Mammary epithelial cell (primary cell): ENCODE measurements at regions of chr15 and their contacts with region 1.

Region 1: DNA sequence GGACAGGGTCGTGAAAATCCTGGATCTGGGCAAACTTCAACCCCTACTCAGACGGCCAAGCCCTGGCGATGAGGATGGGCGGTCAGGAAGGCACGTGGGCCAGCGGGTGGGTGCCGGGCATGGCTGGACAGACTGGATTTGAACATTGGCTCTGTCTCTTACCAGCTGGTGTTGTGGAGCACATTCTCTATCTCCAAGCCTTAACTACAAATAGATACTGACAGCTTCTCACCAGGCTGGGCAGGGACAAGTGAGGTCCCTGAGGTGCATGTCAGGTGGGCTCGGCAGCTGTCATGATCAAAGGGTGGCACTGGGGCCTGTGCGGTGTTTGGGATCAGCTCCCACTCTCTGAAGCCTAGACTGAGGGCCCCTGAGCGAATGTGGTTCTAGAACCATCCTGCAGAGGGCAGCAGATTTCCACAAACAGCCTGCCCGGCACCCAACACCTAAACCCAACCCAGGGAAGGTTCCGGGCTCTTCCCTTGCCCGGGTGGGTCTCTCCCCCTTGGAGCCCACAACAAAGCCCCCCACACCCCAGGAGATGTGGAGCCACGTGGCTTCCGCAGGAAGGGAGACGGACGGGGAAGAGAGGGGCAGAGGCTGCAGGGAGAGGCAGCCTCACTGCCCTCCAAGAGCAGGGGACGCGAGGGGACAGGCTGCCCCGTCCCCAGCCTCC is 58.4 kb downstream of the RGMA start:
- DNase-seq: peak; percentile 62
- H3K4me3 ChIP-seq: no peak overlapping the region
- H3K27ac ChIP-seq: no peak overlapping the region
- H3K4me1 ChIP-seq: peaks cover 33% of the 10 kb centered on the region
- H3K27me3 ChIP-seq: no peaks in the 10 kb centered on the region
- CTCF ChIP-seq: peak; percentile 87 to 88

Region 2: DNA sequence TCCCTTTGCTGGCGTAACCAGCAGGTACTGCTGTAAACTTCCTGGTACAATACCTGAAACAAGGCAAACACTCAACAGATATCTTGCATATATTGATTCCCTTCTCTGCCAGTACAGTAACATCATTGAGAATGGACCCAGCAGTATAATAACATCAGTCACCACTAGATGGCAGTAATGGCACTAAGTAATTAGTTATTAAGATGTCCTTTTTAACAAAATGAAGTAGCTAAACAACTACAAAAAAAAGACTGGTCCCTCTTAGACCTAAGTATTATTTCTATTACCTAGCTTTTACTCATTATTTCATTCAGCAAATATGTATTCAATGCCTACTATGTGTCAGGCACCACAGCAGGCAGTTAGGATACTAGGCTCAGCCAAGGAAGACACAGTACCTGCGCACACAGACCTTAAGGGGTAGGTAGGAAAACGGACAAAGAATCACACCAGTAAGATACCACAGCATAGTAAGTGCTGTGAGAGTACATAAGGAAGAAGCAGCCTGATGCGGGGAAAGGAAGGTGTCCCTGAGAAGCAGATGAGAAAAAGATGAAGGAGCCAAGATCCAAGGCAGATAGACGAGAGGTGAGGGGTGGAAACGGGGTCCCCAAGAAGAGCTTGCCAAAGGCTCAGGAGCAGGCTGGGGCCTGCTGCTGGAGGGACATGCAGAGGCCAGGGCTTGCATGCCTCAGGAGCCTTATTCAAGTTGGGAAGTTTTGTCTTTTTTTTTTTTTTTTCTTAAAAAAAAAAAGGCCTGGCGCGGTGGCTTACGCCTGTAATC is 233.2 kb before region 1 on chr15:
- CTCF ChIA-PET with region 1: no interaction called
- dilution Hi-C with region 1: no loop called
- in situ Hi-C with region 1: no loop called
- intact Hi-C with region 1: loop called (anchors 2 kb)
- DNase-seq: peak; percentile 66
- H3K4me3 ChIP-seq: no peak overlapping the region
- H3K27ac ChIP-seq: peak overlapping the region; percentile 35
- H3K4me1 ChIP-seq: peaks cover 17% of the 10 kb centered on the region
- H3K27me3 ChIP-seq: no peaks in the 10 kb centered on the region
- CTCF ChIP-seq: peak; percentile 58 to 65

Region 3: DNA sequence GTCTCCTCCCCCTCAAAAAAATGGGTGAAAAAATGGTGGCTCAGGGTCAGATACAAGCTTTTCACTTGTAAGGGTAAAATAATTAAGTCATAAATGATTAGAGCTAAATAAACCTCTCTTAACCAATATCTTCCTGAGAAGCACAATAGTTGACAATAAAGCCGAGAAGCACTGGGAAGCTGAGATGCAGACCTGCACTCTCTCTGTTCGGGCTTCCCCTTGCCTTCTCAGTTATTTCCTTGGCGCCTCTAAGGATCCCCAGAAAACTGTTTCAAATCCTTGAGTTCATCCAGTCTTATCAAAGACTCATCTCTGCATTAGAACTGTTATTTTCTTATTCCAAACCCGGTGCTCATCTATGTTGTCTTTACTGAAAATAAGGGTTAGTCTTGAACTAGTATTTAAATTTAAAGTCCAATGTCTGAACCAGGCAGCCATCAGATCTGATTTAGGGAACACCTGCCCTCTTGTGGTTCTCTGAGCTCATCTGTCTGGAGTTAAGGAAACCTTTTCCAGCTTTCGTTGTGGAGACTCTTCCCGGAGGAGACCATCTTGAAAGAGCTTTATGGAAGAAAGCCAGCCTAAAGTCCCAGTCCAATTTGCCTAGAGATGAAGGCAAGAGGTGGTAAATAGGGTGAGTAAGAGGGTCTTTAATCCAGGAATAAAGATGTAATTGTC is 944.4 kb after region 1 on chr15:
- CTCF ChIA-PET with region 1: no interaction called
- dilution Hi-C with region 1: no loop called
- in situ Hi-C with region 1: loop called in 1 of 2 experiments (anchors 25 kb)
- intact Hi-C with region 1: loop called (anchors 2 kb)
- DNase-seq: peak; percentile 33
- H3K4me3 ChIP-seq: no peak overlapping the region
- H3K27ac ChIP-seq: no peak overlapping the region
- H3K4me1 ChIP-seq: no peaks in the 10 kb centered on the region
- H3K27me3 ChIP-seq: no peaks in the 10 kb centered on the region
- CTCF ChIP-seq: peak; percentile 48 to 77

Region 4: GRCh38 chr15:93997084-93997918 is 966.7 kb after region 1 on chr15:
- CTCF ChIA-PET with region 1: no interaction called
- dilution Hi-C with region 1: no loop called
- in situ Hi-C with region 1: loop called in 1 of 2 experiments (anchors 25 kb)
- intact Hi-C with region 1: loop called (anchors 2 kb)
- DNase-seq: peak; percentile 11
- H3K4me3 ChIP-seq: no peak overlapping the region
- H3K27ac ChIP-seq: no peak overlapping the region
- H3K4me1 ChIP-seq: no peaks in the 10 kb centered on the region
- H3K27me3 ChIP-seq: peaks cover 2% of the 10 kb centered on the region
- CTCF ChIP-seq: peak; percentile 74 to 85

Region 5: DNA sequence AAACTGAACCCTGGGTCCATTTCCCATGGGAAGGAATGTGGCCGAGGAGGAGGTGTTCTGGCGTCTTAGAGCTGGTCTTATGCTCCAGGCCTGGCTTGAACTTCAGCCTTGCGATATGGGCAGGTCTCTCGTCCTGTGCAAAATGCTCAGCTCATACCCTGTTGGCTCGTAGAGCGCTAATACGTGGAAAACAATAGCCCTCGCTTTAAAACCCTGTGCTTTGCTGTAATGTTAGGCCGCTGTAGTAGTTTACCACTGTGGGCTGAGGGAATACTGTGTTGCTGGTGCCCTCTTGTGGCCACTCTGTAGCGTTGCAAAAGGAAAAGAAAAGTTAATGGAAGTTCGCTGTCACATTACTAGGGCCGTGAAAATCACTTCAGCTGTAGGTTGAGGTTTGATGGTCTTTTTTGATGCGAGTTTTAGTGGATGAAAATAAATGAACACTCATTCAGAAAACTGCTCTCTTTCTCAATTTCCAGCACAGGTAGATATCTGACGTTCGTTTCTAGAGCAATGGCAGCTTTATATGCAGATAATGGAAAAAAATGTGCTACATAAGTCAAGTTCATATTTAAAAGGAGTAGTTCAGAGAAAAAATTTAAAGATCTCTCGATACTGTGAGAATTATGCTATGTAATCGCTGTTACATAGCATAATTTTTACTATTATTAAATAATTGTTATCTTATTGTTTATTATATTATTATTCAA is 1293.7 kb after region 1 on chr15:
- CTCF ChIA-PET with region 1: no interaction called
- dilution Hi-C with region 1: no loop called
- in situ Hi-C with region 1: no loop called
- intact Hi-C with region 1: loop called (anchors 10 kb)
- DNase-seq: peak; percentile 35
- H3K4me3 ChIP-seq: no peak overlapping the region
- H3K27ac ChIP-seq: no peak overlapping the region
- H3K4me1 ChIP-seq: no peaks in the 10 kb centered on the region
- H3K27me3 ChIP-seq: no peaks in the 10 kb centered on the region
- CTCF ChIP-seq: peak; percentile 93 to 97